Sigmoid colon (tissue), 7 donors: ENCODE measurements at regions of chr9 and their contacts with region 1.

Region 1: GRCh38 chr9:91803151-91803940 is 146.7 kb downstream of the ROR2 start:
- DNase-seq: peak; percentile 51
- H3K4me3 ChIP-seq: no peak overlapping the region
- H3K27ac ChIP-seq: peak overlapping the region; percentile 17 to 85 (median 80)
- H3K4me1 ChIP-seq: peaks cover 0 to 87% (median 86%) of the 10 kb centered on the region in 4 donors
- H3K27me3 ChIP-seq: no peaks in the 10 kb centered on the region
- CTCF ChIP-seq: no peak
- EP300 ChIP-seq: no peak
- POLR2A ChIP-seq: no peak

Region 2: DNA sequence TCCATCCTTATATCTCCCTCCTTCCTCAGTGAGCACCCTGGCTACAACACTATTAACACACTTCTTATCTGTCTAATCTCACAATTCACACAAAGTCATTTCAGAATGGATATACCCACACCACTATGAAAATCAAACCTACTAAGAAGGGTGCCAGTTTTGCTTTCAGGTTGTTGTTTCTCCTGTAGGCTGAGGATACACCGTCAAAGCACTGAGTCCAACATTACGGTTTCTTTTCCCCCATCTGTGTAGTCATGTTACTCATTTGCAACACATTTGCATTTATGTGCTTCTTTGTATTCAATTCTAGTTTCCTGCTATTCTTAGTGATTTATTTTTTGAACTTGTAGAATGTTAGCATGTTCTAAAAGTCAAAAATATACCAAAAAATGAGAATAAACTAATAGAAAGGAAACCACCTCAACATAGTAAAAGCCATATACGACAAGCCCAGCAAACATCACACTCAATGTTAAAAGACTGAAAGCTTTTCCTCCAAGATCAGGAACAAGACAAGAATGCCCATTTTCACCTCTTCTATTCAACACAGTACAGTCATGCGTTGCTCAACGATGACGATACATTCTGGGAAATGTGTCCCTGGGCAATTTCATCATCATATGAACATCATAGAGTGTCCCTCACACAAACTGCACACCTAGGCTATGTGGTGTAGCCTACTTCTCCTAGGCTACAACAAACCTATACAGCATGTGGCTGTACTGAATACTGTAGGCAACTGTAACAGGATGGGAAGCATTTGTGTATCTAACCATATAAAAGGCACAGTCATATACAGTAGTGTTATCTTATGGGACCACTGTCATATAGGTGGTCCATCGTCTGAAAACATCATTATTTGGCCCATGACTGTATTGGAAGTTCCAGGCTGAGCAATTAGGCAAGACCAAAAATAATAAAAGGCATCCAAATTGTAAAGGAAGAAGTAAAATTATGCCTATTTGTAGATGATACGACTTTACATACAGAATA is 140.4 kb after region 1 on chr9:
- intact Hi-C with region 1: loop called (anchors 5 kb)
- DNase-seq: no peak
- H3K4me3 ChIP-seq: no peak overlapping the region
- H3K27ac ChIP-seq: peak overlapping the region; percentile 88 to 95 (median 92)
- H3K4me1 ChIP-seq: peaks cover 0 to 80% (median 70%) of the 10 kb centered on the region in 4 donors
- H3K27me3 ChIP-seq: peaks cover 0 to 4% (median 0%) of the 10 kb centered on the region in 3 donors
- CTCF ChIP-seq: no peak
- EP300 ChIP-seq: peak in 1 of 4 donors; percentile 12
- POLR2A ChIP-seq: no peak